ENCODE measurements at regions of chr9 and their contacts with region 1.

Region 1: DNA sequence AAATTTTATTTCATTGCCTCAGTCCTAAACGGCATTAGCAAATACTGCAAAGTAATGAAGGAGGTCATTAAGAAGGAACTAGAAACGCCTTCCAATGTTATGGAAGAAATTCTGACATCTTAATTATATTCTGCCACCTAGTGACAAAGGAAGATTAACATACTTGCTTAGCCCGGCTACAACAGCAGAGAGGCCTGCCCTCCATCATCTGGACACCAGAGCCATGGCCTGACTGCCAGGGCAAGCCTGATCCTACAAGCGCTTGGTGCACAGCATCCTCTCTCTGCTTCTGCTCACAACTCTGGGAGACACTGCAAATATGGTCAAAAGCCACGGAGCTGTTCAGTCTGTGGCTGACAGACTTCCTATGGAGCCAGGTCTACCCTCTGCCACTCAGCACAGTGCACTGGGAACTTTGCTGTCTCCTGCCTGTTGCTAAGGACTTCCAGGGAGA is 87.3 kb upstream of the SLC44A1 start:
- DNase-seq: peak; percentile 60
- H3K4me3 ChIP-seq: no peak overlapping the region
- H3K27ac ChIP-seq: no peak overlapping the region
- H3K4me1 ChIP-seq: peaks cover 6% of the 10 kb centered on the region
- H3K27me3 ChIP-seq: no peaks in the 10 kb centered on the region
- CTCF ChIP-seq: peak; percentile 41 to 53

Region 2: GRCh38 chr9:104780799-104781395 is 376.3 kb before region 1 on chr9:
- CTCF ChIA-PET with region 1: no interaction called
- dilution Hi-C with region 1: no loop called
- in situ Hi-C with region 1: loop called in 1 of 2 experiments (anchors 10 kb)
- intact Hi-C with region 1: loop called (anchors 2 kb)
- DNase-seq: peak; percentile 43
- H3K4me3 ChIP-seq: no peak overlapping the region
- H3K27ac ChIP-seq: no peak overlapping the region
- H3K4me1 ChIP-seq: peaks cover 7% of the 10 kb centered on the region
- H3K27me3 ChIP-seq: no peaks in the 10 kb centered on the region
- CTCF ChIP-seq: peak; percentile 50 to 53

Region 3: GRCh38 chr9:104991144-104991953 is 165.8 kb before region 1 on chr9:
- CTCF ChIA-PET with region 1: no interaction called
- dilution Hi-C with region 1: no loop called
- in situ Hi-C with region 1: no loop called
- intact Hi-C with region 1: loop called (anchors 5 kb)
- DNase-seq: peak; percentile 78
- H3K4me3 ChIP-seq: peak overlapping the region; percentile 52 to 61 (median 60)
- H3K27ac ChIP-seq: peak overlapping the region; percentile 48
- H3K4me1 ChIP-seq: peaks cover 13% of the 10 kb centered on the region
- H3K27me3 ChIP-seq: no peaks in the 10 kb centered on the region
- CTCF ChIP-seq: no peak

Region 4: GRCh38 chr9:105198865-105199264 is 41.7 kb after region 1 on chr9:
- CTCF ChIA-PET with region 1: no interaction called
- dilution Hi-C with region 1: loop called (anchors 5 kb)
- in situ Hi-C with region 1: no loop called
- intact Hi-C with region 1: no loop called
- DNase-seq: no peak
- H3K4me3 ChIP-seq: no peak overlapping the region
- H3K27ac ChIP-seq: no peak overlapping the region
- H3K4me1 ChIP-seq: no peaks in the 10 kb centered on the region
- H3K27me3 ChIP-seq: no peaks in the 10 kb centered on the region
- CTCF ChIP-seq: no peak

Region 5: GRCh38 chr9:105216440-105217178 is 59.5 kb after region 1 on chr9:
- CTCF ChIA-PET with region 1: no interaction called
- dilution Hi-C with region 1: no loop called
- in situ Hi-C with region 1: no loop called
- intact Hi-C with region 1: no loop called
- DNase-seq: peak; percentile 9
- H3K4me3 ChIP-seq: no peak overlapping the region
- H3K27ac ChIP-seq: no peak overlapping the region
- H3K4me1 ChIP-seq: no peaks in the 10 kb centered on the region
- H3K27me3 ChIP-seq: no peaks in the 10 kb centered on the region
- CTCF ChIP-seq: no peak

Region 6: GRCh38 chr9:105414947-105415661 is 257.9 kb after region 1 on chr9:
- CTCF ChIA-PET with region 1: no interaction called
- dilution Hi-C with region 1: no loop called
- in situ Hi-C with region 1: loop called (anchors 5 kb)
- intact Hi-C with region 1: loop called (anchors 1 kb)
- DNase-seq: peak; percentile 22
- H3K4me3 ChIP-seq: no peak overlapping the region
- H3K27ac ChIP-seq: no peak overlapping the region
- H3K4me1 ChIP-seq: no peaks in the 10 kb centered on the region
- H3K27me3 ChIP-seq: no peaks in the 10 kb centered on the region
- CTCF ChIP-seq: peak; percentile 71 to 86